ENCODE measurements at regions of chr4 and their contacts with region 1.

Region 1: DNA sequence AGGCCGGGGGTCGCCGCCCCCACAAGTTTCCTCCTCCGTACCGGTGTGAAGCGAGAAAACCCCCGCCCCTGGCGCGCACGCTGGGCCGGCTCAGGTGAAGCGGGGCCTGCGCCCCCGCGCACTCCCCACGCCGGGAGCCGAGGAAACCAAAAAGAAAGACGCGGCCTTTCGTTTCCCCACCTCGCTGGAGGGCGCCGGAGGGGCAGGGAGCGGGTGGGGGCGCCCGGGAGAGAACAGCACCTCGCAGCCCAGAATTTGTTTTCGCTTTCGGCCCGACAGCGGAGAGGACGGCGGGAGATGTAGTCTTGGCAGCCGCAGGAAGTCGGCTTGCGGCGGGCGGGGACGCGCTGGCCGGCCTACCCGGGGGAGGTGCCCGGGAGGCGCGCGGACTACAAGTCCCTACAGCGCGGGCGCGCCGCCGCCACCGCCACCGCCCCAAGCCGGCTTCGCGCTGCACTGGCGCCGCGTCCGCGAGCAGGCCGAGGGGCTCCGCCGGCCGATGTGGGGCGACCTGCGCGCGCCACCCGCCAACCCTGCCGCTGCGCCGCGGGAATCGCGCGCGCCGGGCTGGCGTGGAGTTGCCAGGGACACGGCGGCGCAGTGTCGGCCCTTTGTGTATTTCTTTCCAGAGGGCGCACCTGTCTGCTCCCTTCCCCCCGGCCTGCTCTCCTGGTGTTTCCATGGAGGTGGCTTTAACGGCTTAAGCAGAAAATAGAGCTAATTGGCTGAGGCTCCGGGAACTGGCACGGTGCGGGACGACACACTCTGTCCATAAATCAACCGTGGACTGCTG is at the start of gene OTUD4:
- DNase-seq: peak; percentile 86 to 99 (median 97)

Region 2: GRCh38 chr4:145097821-145098674 is 82.4 kb before region 1 on chr4 and contains the starts of genes ABCE1 and ANAPC10:
- intact Hi-C with region 1: loop called (anchors 5 kb)
- DNase-seq: peak; percentile 86 to 98 (median 94)

Region 3: GRCh38 chr4:145481164-145481941 is 300.9 kb after region 1 on chr4 and contains the start of gene SMAD1:
- intact Hi-C with region 1: loop called (anchors 5 kb)
- DNase-seq: peak; percentile 66 to 95 (median 87)

Region 4: DNA sequence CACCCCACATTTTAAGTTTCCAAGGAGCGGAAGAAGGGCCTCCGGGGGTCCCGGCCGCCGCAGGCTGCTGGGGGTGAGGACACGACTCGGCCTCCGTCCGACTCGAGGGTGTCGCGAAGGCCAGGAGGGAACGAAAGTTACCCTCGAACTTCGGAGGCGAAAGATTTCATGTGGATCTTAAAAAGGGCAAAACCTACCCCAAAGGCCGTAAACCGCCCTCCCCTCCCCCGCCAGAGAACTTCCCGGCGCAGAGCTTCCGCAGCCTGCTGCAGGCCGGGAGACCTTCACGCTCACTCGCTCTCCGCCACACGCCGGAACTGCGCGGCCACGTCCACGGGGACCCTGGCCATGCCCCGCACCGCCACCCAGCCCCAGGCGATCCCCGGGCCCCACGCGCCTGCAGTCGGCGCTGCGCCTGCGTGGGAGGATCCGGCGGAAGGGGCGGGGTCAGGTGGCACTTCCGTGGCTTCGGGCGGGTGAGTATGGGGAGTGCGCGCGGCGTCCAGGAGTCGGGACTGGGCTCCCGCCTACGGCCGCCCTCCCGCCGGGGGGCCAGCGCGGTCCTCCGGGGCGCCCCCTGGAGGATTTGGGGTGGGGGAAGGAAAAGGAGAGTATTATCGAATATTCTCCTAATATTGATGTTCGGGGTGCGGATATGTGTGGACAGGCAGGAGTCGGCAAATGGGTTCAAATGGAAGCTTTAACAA is 438.6 kb after region 1 on chr4 and contains the start of gene MMAA:
- intact Hi-C with region 1: loop called (anchors 5 kb)
- DNase-seq: peak; percentile 81 to 98 (median 95)

Region 5: DNA sequence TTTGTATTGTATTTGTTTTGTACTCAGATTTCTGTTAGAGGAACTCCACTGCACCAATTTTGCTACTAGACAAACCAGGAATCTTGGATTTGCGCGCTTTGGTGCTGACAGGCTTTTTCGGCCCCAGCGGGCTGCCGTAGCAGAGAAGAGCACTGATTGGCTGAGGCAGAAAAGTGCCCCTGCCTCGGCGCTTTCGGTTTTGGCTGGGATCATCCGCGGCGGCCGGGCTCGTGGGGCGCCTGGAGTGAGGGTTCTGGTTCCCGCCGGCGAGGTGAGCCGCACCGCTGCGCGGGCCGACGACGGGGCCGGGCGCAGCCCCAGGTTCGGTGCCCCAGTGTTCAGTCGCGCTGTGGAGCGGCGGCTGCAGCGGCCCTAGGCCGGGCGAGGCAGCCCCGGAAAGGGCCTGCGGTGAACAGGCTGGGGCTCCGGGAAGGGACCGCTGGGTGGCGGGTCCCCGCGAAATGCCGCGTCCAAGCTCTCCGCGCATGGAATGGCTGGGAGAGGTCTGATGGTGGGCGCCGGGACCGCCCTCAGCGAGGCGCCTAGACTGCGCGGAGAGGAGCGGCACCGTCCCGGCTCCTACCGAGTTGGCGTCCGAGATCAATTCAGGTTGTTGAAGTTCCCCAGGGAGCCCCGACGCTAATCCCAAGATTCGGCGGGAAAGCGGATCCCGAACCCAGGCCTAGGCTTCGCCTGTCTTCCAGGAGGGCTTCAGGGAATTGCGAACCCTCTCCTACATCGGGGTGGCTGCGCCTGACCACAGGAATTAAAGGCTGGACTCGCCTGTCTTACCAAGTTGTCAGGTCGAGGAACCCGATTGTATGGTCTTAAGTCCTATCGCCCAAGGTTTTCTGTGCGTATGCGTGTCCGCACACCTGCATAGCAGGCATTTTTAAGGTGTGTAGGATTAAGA is 995.3 kb after region 1 on chr4 and contains the start of gene LSM6:
- intact Hi-C with region 1: loop called (anchors 10 kb)
- DNase-seq: peak; percentile 86 to 97 (median 94)